ENCODE measurements at regions of chr18 and their contacts with region 1.

Region 1: DNA sequence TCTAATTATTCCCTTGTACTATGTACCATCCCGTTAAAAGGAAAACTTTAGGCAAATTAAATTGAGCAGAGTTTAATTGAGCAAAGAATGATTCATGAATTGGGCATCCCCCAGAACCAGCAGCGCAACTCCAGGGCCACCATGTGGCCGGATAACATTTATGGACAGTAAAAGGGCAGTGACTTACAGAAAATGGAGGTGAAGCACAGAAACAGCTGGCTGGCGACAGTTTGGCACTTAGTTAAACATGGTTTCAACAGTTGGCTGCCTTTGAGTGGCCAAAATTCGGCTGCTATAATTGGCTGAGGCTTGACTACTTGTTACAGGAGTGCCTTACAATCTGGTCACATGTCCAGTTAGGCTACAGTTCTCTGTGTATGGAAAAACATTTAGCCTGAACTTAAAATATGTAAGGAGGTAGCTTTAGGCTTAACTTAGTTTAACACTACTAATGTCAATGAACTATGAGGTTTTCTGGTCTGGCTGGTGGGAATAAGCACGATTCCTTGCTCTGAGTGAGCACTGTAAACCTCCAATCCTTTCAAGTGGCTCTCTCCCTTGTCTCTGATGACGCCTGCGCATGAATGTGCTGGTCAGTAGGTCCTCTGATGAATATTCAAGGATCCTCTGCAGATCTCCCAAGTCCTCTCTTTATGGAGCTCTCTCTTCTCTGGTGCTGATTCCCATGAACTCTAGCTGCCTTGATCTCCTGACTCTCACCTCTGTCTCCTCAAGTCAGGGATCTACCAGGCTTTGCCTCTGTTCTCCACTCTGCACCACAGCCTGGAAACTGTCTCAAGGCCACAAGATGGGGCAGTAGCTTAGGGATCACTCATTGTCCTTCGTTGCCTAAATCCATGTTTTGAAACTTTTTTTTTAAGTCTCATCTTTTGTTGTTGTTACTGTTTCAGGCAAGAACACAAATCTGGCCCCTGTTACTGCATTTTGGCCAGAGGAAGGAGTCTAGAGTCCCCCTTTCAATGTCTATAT is 24.4 kb upstream of the RAB31 start:
- DNase-seq: no peak
- H3K4me3 ChIP-seq: no peak overlapping the region
- H3K27ac ChIP-seq: peak overlapping the region; percentile 40 to 61 (median 54)
- H3K4me1 ChIP-seq: peaks cover 11 to 26% (median 24%) of the 10 kb centered on the region in 4 donors
- H3K27me3 ChIP-seq: no peaks in the 10 kb centered on the region
- CTCF ChIP-seq: peak; percentile 46 to 62 (median 62)
- EP300 ChIP-seq: no peak
- POLR2A ChIP-seq: no peak

Region 2: DNA sequence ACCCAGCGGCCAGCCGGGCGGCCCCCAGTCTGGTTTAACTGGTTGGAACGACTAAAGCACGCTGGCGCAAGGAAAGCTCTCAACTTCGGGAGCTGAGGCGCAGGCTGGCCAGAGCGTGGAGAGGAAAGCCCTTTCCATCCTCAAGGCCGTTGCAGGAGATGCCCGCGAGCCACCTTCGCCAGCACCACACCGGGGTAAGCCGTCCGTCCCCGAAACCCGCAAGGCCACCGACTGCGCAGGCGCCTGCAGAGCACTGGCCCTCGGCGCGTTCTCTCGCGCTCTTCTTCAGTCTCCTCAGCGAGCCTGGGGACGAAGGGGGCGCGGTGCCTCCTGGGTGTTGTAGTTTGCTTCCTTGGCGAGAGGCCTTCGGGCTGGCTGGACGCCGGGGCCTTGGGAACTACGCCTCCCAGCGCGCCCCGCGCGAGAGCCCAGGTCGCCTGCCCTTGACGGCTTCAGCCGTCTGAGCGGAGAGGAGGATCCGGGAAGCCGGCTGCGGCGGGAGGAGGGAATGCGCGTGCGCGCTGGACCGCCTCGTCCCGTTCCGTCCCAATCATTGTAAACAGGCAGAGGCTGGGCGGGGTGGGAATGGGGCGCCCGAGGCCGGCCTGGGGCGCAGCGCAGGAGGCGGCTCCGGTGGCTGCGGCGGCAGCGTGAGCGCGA is 208.6 kb before region 1 on chr18 and contains the start of gene RALBP1:
- intact Hi-C with region 1: no loop called
- DNase-seq: peak; percentile 99
- H3K4me3 ChIP-seq: peak within 1 kb of the TSS; percentile 82 to 94 (median 88)
- H3K27ac ChIP-seq: peak within 1 kb of the TSS; percentile 87 to 96 (median 92)
- H3K4me1 ChIP-seq: peaks cover 19 to 28% (median 20%) of the 10 kb centered on the region in 4 donors
- H3K27me3 ChIP-seq: no peaks in the 10 kb centered on the region
- CTCF ChIP-seq: peak in 2 of 3 experiments; percentile 39 to 51
- EP300 ChIP-seq: no peak
- POLR2A ChIP-seq: peak; percentile 53
- total RNA-seq, gene RALBP1: 103 to 164 (median 115) TPM

Region 3: DNA sequence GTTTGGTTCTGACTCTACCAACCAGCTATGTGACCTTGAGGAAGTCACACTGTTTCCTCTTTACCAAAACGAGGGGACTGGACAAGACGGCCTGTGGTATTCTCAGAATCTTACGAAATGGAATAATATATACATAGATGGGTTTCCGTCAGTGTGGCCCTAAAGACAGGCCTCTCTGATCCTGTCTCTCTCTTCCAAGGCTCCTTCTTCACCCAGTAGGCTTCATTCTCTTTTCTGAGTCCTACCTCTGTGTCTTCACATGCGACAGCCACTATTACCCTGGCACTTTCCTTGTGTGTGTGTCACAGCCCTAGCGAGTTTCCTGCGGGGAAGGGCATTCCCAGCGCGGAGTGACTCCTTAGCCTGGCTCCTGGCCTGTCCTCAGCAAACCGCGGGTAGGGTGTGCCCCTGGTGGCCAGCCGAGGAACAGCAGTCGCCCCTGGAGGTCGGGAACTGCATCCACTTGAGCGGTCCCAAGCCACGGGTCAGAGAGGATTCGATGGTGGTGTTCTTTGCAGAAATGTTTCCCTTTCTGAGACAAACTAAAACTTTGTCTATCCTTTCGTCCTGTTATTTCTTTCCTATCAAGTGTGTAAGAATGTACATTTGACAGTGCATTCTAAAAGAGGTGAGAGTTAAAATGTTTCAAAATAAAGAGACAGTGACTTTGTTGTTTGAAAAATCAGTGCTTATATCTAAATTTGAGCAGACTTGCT is 87.7 kb after region 1 on chr18:
- intact Hi-C with region 1: loop called (anchors 5 kb)
- DNase-seq: peak; percentile 94
- H3K4me3 ChIP-seq: peak overlapping the region in 1 of 4 donors; percentile 18
- H3K27ac ChIP-seq: peak overlapping the region in 3 of 4 donors; percentile 10 to 55 (median 48)
- H3K4me1 ChIP-seq: peaks cover 10 to 31% (median 18%) of the 10 kb centered on the region in 4 donors
- H3K27me3 ChIP-seq: no peaks in the 10 kb centered on the region
- CTCF ChIP-seq: peak; percentile 82 to 100 (median 90)
- EP300 ChIP-seq: no peak
- POLR2A ChIP-seq: no peak

Region 4: GRCh38 chr18:9951022-9951859 is 267.5 kb after region 1 on chr18:
- intact Hi-C with region 1: loop called (anchors 5 kb)
- DNase-seq: no peak
- H3K4me3 ChIP-seq: no peak overlapping the region
- H3K27ac ChIP-seq: peak overlapping the region in 1 of 4 donors; percentile 5
- H3K4me1 ChIP-seq: peaks cover 5 to 44% (median 12%) of the 10 kb centered on the region in 4 donors
- H3K27me3 ChIP-seq: no peaks in the 10 kb centered on the region
- CTCF ChIP-seq: peak; percentile 50 to 73 (median 63)
- EP300 ChIP-seq: no peak
- POLR2A ChIP-seq: no peak

Measured in esophagus muscularis mucosa (tissue), 4 donors.